Sciatic nerve (tissue), 2 donors: ENCODE measurements at regions of chr9 and their contacts with region 1.

Region 1: DNA sequence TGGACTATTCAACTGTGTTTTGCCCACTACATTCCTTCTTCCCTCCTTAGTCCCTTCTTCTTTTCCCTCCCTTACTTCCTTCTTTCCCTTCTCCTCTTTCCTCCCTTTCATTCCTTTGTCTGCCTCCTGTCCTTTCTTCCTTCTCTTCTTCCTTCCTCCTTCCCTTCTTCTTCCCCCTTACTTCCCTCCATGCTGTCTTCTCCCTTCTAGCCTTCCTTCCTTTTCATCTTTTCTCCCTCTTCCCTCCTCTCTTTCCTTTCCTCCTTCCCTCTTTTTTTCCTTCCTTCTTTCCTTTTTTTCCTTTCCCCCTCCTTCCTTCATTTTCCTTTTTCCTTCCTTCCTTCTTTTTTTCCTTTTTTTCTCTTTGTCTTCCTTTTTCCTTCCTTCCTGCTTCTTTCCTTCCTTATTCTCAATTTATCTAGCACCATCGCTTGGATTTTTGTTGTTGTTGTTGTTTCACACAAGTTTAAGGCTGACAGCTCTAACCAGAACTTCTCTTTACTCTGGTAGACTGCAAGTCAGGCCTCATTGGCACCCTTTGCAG is 123.4 kb downstream of the CEMIP2 start:
- DNase-seq: no peak
- ATAC-seq: no peak

Region 2: GRCh38 chr9:71709384-71709783 is 64.5 kb after region 1 on chr9:
- intact Hi-C with region 1: loop called (anchors 2 kb)
- DNase-seq: no peak
- ATAC-seq: no peak